Posterior cingulate gyrus (tissue), 11 donors: ENCODE measurements at regions of chr20 and their contacts with region 1.

Region 1: GRCh38 chr20:34579191-34579978 is 20.9 kb downstream of the MAP1LC3A start:
- DNase-seq: peak; percentile 66 to 98 (median 84)

Region 2: GRCh38 chr20:34709831-34710567 is 130.6 kb after region 1 on chr20:
- intact Hi-C with region 1: loop called (anchors 1 kb)
- DNase-seq: peak; percentile 35 to 96 (median 79)